PC-3 (cell line): ENCODE measurements at regions of chr1 and their contacts with region 1.

Region 1: DNA sequence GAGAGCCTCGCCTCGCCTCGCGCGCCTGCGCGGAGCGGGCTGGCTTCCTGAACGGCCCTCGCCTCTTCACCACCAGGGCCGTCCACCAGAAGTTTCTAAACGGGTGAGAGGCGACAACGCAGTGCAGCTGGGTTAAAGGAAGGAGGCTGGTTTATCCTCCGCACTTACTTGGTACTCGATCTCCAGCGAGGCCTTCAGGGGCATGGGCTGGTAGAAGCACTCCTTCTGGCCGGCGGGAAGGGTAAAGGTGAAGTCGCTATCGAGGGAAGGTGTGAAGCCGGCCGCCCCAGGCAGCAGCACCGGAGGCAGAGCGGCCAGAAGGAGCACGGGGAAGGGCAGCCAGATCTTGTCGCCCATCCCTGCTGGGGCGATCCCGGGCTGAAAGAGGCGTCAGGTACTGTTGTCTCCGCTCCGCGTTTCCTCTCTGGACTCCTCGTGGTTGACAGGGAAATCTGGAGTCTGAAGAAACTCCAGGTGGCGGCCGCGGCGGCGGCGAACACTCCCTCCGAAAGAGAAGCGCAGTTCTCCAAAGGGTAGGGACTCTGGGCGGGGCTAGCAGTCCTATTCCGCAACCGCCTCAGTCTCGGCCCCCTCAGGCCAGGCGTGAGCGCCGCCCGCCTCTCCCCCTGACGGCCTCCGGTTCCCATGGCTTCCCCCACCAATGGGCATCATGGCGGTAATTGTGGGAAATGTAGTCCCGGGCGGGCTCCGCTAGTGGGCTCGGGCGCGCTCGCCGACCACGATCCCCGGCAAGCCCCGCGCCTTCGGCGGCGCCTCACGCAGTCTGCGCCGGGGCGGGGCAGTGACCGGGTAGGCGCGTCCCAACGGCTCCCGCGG is at the start of gene TMED5:
- DNase-seq: peak; percentile 98
- ATAC-seq: peak; percentile 93
- H3K4me3 ChIP-seq: peak within 1 kb of the TSS; percentile 93
- H3K27ac ChIP-seq: peak within 1 kb of the TSS; percentile 98
- H3K4me1 ChIP-seq: peaks cover 22% of the 10 kb centered on the region
- H3K27me3 ChIP-seq: no peaks in the 10 kb centered on the region
- CTCF ChIP-seq: no peak
- total RNA-seq, gene TMED5: 51.6 and 59.2 TPM in 2 replicates

Region 2: GRCh38 chr1:93093332-93094006 is 86.6 kb before region 1 on chr1:
- CTCF ChIA-PET with region 1: no interaction called
- POLR2A ChIA-PET with region 1: no interaction called
- intact Hi-C with region 1: no loop called
- DNase-seq: no peak
- ATAC-seq: peak; percentile 58
- H3K4me3 ChIP-seq: no peak overlapping the region
- H3K27ac ChIP-seq: no peak overlapping the region
- H3K4me1 ChIP-seq: no peaks in the 10 kb centered on the region
- H3K27me3 ChIP-seq: no peaks in the 10 kb centered on the region
- CTCF ChIP-seq: no peak

Region 3: DNA sequence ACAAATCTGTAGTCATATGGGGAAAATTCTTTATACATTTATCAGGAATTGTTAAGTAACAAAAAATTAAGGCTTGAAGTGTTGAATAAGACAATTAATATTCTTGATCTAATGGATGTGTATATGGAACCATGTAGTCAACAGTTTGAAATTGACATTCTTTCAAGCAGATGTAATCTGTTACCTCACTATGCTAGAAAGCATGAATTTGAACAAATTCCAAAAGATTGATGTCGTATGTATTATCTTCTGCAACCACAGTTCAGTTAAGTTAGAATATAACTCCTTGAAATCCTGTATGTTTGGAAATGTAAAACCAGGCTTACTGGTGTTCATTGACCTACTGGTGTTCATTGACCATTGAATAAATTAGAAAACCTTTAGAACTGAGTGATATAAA is 16.5 kb after region 1 on chr1:
- CTCF ChIA-PET with region 1: no interaction called
- POLR2A ChIA-PET with region 1: no interaction called
- intact Hi-C with region 1: no loop called
- DNase-seq: no peak
- ATAC-seq: no peak
- H3K4me3 ChIP-seq: no peak overlapping the region
- H3K27ac ChIP-seq: no peak overlapping the region
- H3K4me1 ChIP-seq: no peaks in the 10 kb centered on the region
- H3K27me3 ChIP-seq: no peaks in the 10 kb centered on the region
- CTCF ChIP-seq: no peak

Region 4: GRCh38 chr1:93345633-93346420 is 165.7 kb after region 1 on chr1 and contains the start of gene DR1:
- CTCF ChIA-PET with region 1: no interaction called
- POLR2A ChIA-PET with region 1: no interaction called
- intact Hi-C with region 1: loop called (anchors 10 kb)
- DNase-seq: peak; percentile 94
- ATAC-seq: peak; percentile 87
- H3K4me3 ChIP-seq: peak within 1 kb of the TSS; percentile 97
- H3K27ac ChIP-seq: peak within 1 kb of the TSS; percentile 91
- H3K4me1 ChIP-seq: peaks cover 12% of the 10 kb centered on the region; the same call in 1 of the 2 replicates
- H3K27me3 ChIP-seq: no peaks in the 10 kb centered on the region
- CTCF ChIP-seq: no peak
- total RNA-seq, gene DR1: 34.8 and 48.6 TPM in 2 replicates